ENCODE measurements at regions of chr3 and their contacts with region 1.

Region 1: DNA sequence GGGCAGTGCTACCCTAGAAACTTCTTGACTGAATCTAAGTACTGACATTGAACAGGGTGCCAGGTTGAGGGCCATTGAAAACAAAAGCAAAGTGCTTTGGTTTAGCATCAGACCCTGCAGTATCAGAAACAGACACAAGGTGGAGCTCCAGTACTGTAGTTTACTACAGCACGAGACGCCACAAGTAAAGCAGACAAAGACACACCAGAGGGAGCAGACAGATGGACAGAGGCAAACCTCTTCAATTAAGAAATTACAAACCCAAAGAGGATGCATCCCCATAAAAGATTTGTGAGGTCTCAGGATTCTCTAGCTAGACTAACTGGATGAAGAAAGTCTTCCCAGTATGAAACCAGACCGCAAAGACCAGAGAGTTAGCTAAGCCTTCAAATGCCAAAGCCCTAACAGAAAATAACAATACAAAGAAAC is 16.6 kb downstream of the TOP2B start:
- DNase-seq: peak; percentile 56
- H3K4me3 ChIP-seq: no peak overlapping the region
- H3K27ac ChIP-seq: no peak overlapping the region
- H3K27me3 ChIP-seq: no peaks in the 10 kb centered on the region
- CTCF ChIP-seq: peak; percentile 95

Region 2: DNA sequence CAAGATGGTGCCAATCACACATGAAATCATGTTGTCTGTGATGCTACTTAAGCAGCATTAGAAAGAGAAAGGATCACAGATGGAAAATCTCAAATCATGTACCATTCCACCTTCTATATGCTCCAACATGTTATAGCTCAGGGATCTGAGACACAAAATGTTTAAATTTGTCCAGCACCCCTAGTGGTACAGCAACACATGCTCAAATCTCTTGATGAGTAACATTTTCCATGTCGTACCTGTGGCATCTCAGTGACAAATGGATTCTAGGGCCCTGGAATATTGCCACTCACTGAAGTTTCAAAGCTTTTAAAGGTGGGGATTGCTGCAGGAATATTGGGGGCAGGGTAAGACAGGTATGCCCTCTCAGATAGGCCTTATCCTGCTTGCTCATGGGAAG is 734.1 kb before region 1 on chr3:
- CTCF ChIA-PET with region 1: no interaction called
- POLR2A ChIA-PET with region 1: no interaction called
- DNase-seq: no peak
- H3K4me3 ChIP-seq: no peak overlapping the region
- H3K27ac ChIP-seq: no peak overlapping the region
- H3K27me3 ChIP-seq: no peaks in the 10 kb centered on the region
- CTCF ChIP-seq: no peak

Region 3: GRCh38 chr3:25633919-25634318 is 14.2 kb before region 1 on chr3:
- CTCF ChIA-PET with region 1: interaction called, 67 read pairs
- POLR2A ChIA-PET with region 1: no interaction called
- DNase-seq: no peak
- H3K4me3 ChIP-seq: no peak overlapping the region
- H3K27ac ChIP-seq: no peak overlapping the region
- H3K27me3 ChIP-seq: no peaks in the 10 kb centered on the region
- CTCF ChIP-seq: no peak

Region 4: DNA sequence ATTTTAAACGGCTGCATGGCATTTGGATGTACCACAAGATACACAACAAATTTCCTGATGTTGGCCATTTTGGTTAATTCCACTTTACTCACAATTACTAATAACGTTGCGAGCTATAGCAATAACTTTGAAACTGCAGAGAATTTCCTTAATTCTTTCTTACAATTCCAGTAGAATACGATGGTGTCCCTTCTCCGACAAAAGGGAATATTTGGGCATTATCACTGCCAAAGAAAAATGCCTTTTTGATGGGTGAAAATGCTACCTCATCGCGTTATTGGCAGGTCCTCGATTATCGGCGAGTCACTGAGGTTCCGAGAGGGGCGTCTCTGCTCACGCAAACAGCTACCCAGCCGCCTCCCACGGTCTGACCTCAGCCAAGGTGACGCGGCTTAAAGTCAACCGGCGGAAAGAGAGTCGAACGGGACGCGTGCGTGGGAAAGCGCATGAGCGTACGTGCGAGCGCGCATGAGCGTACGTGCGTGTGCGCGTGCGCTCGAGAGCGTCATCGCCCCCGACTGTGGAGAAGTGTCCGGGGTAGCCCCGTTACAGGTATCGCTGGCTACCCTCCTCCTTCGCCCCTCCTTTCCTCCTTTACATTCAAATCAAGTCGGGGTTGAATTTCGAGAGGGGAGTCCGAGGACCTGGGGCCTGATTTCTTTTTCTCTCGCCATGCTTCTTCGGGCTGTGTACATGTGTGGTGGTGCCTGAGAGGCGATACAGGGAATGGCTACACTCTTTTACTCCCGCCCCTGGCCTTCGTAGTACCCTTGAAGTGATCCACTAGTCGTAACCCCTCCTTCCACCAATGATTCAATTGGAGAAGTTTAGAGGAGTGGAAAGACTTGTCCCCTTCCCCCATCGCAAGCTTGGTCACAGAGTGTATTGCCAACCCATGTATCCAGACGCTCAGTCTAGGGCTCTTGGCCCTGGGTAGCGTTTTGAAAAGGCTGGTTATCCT is 141.8 kb after region 1 on chr3 and contains the start of gene OXSM:
- CTCF ChIA-PET with region 1: interaction called, 10 read pairs
- POLR2A ChIA-PET with region 1: no interaction called
- DNase-seq: peak; percentile 74
- H3K4me3 ChIP-seq: peak within 1 kb of the TSS; percentile 79
- H3K27ac ChIP-seq: peak within 1 kb of the TSS; percentile 91
- H3K27me3 ChIP-seq: no peaks in the 10 kb centered on the region
- CTCF ChIP-seq: no peak
- polyA plus RNA-seq, gene OXSM: 15.9 and 19.7 TPM in 2 replicates

Region 5: GRCh38 chr3:25844891-25845290 is 196.8 kb after region 1 on chr3:
- CTCF ChIA-PET with region 1: interaction called, 10 read pairs
- POLR2A ChIA-PET with region 1: no interaction called
- DNase-seq: no peak
- H3K4me3 ChIP-seq: no peak overlapping the region
- H3K27ac ChIP-seq: no peak overlapping the region
- H3K27me3 ChIP-seq: no peaks in the 10 kb centered on the region
- CTCF ChIP-seq: no peak

Region 6: GRCh38 chr3:26505399-26505798 is 857.3 kb after region 1 on chr3:
- CTCF ChIA-PET with region 1: no interaction called
- POLR2A ChIA-PET with region 1: no interaction called
- DNase-seq: no peak
- H3K4me3 ChIP-seq: no peak overlapping the region
- H3K27ac ChIP-seq: no peak overlapping the region
- H3K27me3 ChIP-seq: no peaks in the 10 kb centered on the region
- CTCF ChIP-seq: no peak